GM12878 (cell line): ENCODE measurements at regions of chr9 and their contacts with region 1.

Region 1: DNA sequence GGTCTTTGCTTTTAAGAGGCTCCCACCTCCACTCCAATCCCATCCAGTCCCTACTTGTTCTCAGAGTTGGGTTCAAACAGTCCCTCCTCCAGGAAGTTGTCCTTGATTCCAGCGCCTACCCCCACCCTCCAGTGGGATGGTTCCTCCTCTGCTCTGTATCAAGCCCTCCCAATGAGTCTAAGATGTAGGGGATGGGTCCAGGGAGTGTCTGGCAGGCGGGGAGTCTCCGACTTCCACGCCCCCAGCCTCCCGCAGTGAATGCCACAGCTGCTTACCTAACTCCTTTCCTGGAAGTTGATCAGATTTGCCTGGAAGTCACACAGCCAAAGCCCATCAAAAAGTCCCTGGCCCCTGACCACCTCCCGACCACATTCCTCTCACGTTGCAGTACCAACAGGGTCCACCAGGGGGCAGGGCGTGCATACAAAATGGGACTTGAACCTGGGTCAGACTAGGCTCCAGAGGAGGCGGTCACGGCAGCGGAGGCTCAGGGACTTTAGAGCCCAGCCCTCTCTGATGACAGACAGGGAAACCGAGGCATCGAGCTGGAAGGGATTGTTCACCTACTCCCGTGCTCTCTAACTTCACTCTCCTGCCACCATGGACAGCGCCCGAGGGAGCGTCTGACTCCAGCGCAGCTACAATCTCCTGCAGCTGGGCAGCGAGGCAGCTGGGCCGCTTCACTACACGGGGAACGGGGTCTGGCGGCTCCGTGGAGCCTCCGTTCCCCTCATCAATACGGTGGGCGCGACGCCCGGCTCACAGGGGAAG is 25.0 kb upstream of the TDRD7 start:
- DNase-seq: no peak
- ATAC-seq: peak; percentile 44
- H3K4me3 ChIP-seq: no peak overlapping the region
- H3K27ac ChIP-seq: no peak overlapping the region
- H3K4me1 ChIP-seq: peaks cover 43% of the 10 kb centered on the region
- H3K27me3 ChIP-seq: no peaks in the 10 kb centered on the region
- CTCF ChIP-seq: peak; percentile 95 to 100 (median 98)
- EP300 ChIP-seq: no peak
- POLR2A ChIP-seq: no peak
- RAD21 ChIP-seq: peak; percentile 91

Region 2: GRCh38 chr9:97237951-97238851 is 148.7 kb before region 1 on chr9:
- CTCF ChIA-PET with region 1: no interaction called
- POLR2A ChIA-PET with region 1: no interaction called
- RAD21 ChIA-PET with region 1: no interaction called
- SMC1A ChIA-PET with region 1: no interaction called
- in situ Hi-C with region 1: no loop called
- intact Hi-C with region 1: no loop called
- DNase-seq: no peak
- ATAC-seq: peak; percentile 84
- H3K4me3 ChIP-seq: peak overlapping the region; percentile 8; the same call in 1 of the 2 replicates
- H3K27ac ChIP-seq: no peak overlapping the region
- H3K4me1 ChIP-seq: no peaks in the 10 kb centered on the region
- H3K27me3 ChIP-seq: peaks cover 0 to 5% of the 10 kb centered on the region in 2 experiments
- CTCF ChIP-seq: no peak
- EP300 ChIP-seq: no peak
- POLR2A ChIP-seq: peak; percentile 26; the same call in 1 of the 2 replicates
- RAD21 ChIP-seq: no peak

Region 3: DNA sequence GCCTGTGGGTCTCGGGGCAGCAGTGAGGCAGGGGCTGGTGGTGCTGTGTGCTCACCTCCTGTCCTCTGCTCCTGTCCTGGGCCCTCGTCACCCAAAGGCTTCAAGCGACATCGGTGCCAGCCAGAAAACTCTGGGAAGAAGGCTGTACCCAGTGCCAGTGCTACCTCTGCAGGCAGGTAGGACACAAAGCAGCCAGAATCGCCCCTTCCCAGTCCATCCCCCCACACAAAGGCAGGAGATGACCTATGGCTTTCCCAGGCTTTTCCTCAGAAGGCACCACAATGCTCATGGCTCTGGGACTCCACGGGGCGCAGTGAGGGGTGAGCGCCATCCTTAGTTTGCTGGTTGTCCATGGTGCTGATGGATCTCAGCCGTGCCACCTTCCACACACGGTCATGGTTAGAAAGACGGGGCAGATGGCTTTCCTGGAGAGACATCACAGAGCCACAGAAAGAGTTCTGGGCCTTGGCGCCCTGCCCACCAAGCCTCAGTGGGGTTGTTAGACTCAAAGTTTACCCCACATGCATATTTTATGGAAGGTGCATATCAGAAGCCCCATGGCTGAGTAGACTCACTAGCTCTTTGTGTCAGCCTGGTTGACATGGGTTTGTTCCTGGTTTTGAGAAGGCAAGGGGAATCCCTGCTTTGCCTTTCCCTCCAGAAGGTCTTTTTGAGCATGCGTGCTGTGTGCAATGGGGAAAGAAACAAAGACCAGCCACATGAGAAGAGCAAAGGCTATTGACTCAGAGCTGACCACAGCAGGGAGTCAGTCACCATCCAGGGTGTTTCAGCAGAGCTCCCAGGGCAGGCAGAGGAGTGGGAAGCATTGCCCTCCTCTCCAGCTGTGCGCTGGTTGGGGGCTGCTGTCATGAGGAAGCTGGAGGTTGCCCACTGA is 24.4 kb before region 1 on chr9:
- CTCF ChIA-PET with region 1: interaction called, 40 read pairs
- POLR2A ChIA-PET with region 1: no interaction called
- RAD21 ChIA-PET with region 1: interaction called, 25 read pairs
- SMC1A ChIA-PET with region 1: interaction called, 29 read pairs
- in situ Hi-C with region 1: no loop called
- intact Hi-C with region 1: no loop called
- DNase-seq: peak; percentile 44
- ATAC-seq: peak; percentile 34
- H3K4me3 ChIP-seq: peak overlapping the region; percentile 19; the same call in 1 of the 2 replicates
- H3K27ac ChIP-seq: no peak overlapping the region
- H3K4me1 ChIP-seq: peaks cover 49% of the 10 kb centered on the region
- H3K27me3 ChIP-seq: no peaks in the 10 kb centered on the region; a peak in 1 of 4 replicates
- CTCF ChIP-seq: no peak
- EP300 ChIP-seq: no peak
- POLR2A ChIP-seq: no peak
- RAD21 ChIP-seq: no peak

Region 4: GRCh38 chr9:97373331-97373730 is 13.6 kb before region 1 on chr9:
- CTCF ChIA-PET with region 1: interaction called, 40 read pairs
- POLR2A ChIA-PET with region 1: no interaction called
- RAD21 ChIA-PET with region 1: interaction called, 25 read pairs
- SMC1A ChIA-PET with region 1: interaction called, 29 read pairs
- in situ Hi-C with region 1: no loop called
- intact Hi-C with region 1: no loop called
- DNase-seq: no peak
- ATAC-seq: no peak
- H3K4me3 ChIP-seq: no peak overlapping the region
- H3K27ac ChIP-seq: no peak overlapping the region
- H3K4me1 ChIP-seq: no peaks in the 10 kb centered on the region
- H3K27me3 ChIP-seq: no peaks in the 10 kb centered on the region
- CTCF ChIP-seq: no peak
- EP300 ChIP-seq: no peak
- POLR2A ChIP-seq: no peak
- RAD21 ChIP-seq: no peak

Region 5: DNA sequence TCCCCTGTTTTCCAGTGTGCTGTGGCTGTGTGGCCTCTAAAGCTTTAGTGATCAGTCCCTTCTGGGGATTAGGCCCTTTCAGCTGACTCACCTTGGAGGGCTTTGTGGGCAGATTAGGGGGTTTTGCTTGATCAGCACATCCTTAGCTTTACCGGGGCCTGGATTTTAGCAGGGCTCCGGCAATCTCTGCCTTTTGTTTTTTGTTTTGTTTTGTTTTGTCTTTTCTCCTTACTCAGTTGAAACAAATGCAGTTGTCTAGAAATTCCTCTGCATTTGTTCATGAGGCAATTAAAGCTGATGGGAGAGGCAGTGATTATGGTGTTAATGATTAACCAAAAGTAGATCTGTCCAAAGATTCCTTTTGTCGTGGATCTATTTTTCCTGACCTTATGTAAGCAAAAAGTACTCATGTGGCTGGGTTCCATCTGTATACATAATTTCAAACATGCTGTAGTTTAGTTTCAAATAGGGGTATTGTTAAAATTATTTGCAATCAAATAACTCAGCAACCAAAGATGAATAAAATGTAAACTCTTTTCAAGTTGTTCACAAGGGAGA is 19.8 kb after region 1 on chr9:
- CTCF ChIA-PET with region 1: interaction called, 157 read pairs
- POLR2A ChIA-PET with region 1: interaction called, 5 read pairs
- RAD21 ChIA-PET with region 1: interaction called, 26 read pairs
- SMC1A ChIA-PET with region 1: interaction called, 14 read pairs
- in situ Hi-C with region 1: no loop called
- intact Hi-C with region 1: loop called (anchors 2 kb)
- DNase-seq: no peak
- ATAC-seq: peak; percentile 60
- H3K4me3 ChIP-seq: no peak overlapping the region
- H3K27ac ChIP-seq: no peak overlapping the region
- H3K4me1 ChIP-seq: no peaks in the 10 kb centered on the region
- H3K27me3 ChIP-seq: no peaks in the 10 kb centered on the region; a peak in 1 of 4 replicates
- CTCF ChIP-seq: no peak
- EP300 ChIP-seq: no peak
- POLR2A ChIP-seq: no peak
- RAD21 ChIP-seq: no peak